Naive thymus-derived CD4-positive, alpha-beta T cell (primary cell): ENCODE measurements at regions of chr4 and their contacts with region 1.

Region 1: DNA sequence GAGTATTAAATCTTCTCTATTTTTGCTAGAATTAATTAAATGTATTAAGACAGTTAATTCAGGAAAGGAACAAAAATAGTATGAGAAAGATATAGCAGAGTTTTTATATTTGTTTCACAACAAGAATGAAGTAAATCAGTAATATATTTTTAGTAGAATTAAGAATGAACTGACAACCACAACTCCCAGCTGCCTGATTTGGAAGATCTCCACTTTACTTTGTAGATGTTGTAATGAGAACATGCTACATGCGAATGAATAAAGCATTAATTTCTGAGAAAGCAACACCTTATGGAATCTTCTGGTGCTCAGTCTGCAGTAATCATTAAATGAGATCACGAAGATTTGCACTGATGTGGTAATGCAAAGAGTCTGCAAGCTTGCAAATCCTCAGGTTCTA is 695.6 kb upstream of the PCDH7 start:
- DNase-seq: no peak
- ATAC-seq: no peak
- H3K4me3 ChIP-seq: no peak overlapping the region
- H3K4me3 Mint-ChIP-seq: no peak overlapping the region
- H3K27ac ChIP-seq: no peak overlapping the region
- H3K27ac Mint-ChIP-seq: no peak overlapping the region
- H3K4me1 ChIP-seq: no peaks in the 10 kb centered on the region
- H3K4me1 Mint-ChIP-seq: no peaks in the 10 kb centered on the region
- H3K27me3 ChIP-seq: no peaks in the 10 kb centered on the region
- H3K27me3 Mint-ChIP-seq: no peaks in the 10 kb centered on the region

Region 2: GRCh38 chr4:30056016-30056766 is 31.7 kb after region 1 on chr4:
- CTCF ChIA-PET with region 1: no interaction called
- POLR2A ChIA-PET with region 1: no interaction called
- intact Hi-C with region 1: loop called in 1 of 2 experiments (anchors 1 kb)
- DNase-seq: no peak
- ATAC-seq: no peak
- H3K4me3 ChIP-seq: no peak overlapping the region
- H3K4me3 Mint-ChIP-seq: no peak overlapping the region
- H3K27ac ChIP-seq: no peak overlapping the region
- H3K27ac Mint-ChIP-seq: no peak overlapping the region
- H3K4me1 ChIP-seq: no peaks in the 10 kb centered on the region
- H3K4me1 Mint-ChIP-seq: no peaks in the 10 kb centered on the region
- H3K27me3 ChIP-seq: no peaks in the 10 kb centered on the region
- H3K27me3 Mint-ChIP-seq: no peaks in the 10 kb centered on the region